CD8-positive, alpha-beta T cell (primary cell): ENCODE measurements at regions of chr1 and their contacts with region 1.

Region 1: GRCh38 chr1:89929467-89930063 is 65.3 kb upstream of the ZNF326 start:
- DNase-seq: no peak
- ATAC-seq: no peak
- H3K4me3 ChIP-seq: no peak overlapping the region
- H3K4me3 Mint-ChIP-seq: no peak overlapping the region
- H3K27ac ChIP-seq: no peak overlapping the region
- H3K27ac Mint-ChIP-seq: peak overlapping the region; percentile 32
- H3K4me1 ChIP-seq: peaks cover 7% of the 10 kb centered on the region
- H3K4me1 Mint-ChIP-seq: peaks cover 30% of the 10 kb centered on the region
- H3K27me3 ChIP-seq: no peaks in the 10 kb centered on the region
- H3K27me3 Mint-ChIP-seq: no peaks in the 10 kb centered on the region
- CTCF ChIP-seq: no peak

Region 2: DNA sequence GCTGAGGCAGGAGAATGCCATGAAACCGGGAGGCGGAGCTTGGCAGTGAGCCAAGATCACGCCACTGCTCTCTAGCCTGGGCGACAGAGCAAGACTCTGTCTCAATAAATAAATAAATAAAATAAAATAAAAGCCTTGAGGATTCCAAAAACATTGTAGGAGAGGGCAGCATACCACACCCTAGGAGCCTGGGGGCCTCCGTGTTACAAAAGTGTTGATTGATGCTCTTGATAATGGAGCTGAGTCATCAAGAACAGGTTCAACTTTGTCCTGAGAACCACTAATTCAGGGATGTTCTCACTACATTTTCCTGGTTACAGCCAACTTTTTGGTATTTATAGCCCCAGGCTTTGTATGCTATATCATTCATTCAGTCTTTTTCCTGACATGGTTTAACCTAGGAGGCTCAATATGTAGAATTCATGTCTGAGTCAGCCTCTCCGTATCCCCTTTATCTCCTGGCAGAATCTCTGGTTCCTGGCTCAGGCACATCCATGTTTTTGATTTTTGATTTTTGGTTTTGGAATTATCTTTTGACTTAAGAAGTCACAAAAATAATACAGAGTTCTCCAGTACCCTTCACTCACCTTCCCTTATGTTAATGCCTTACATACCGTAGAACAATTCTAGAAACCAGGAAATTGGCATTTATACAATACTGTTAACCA is 39.3 kb before region 1 on chr1:
- CTCF ChIA-PET with region 1: no interaction called
- POLR2A ChIA-PET with region 1: no interaction called
- intact Hi-C with region 1: loop called in 1 of 2 experiments (anchors 5 kb)
- DNase-seq: no peak
- ATAC-seq: no peak
- H3K4me3 ChIP-seq: no peak overlapping the region
- H3K4me3 Mint-ChIP-seq: no peak overlapping the region
- H3K27ac ChIP-seq: no peak overlapping the region
- H3K27ac Mint-ChIP-seq: no peak overlapping the region
- H3K4me1 ChIP-seq: no peaks in the 10 kb centered on the region
- H3K4me1 Mint-ChIP-seq: peaks cover 43% of the 10 kb centered on the region
- H3K27me3 ChIP-seq: no peaks in the 10 kb centered on the region
- H3K27me3 Mint-ChIP-seq: no peaks in the 10 kb centered on the region
- CTCF ChIP-seq: no peak

Region 3: DNA sequence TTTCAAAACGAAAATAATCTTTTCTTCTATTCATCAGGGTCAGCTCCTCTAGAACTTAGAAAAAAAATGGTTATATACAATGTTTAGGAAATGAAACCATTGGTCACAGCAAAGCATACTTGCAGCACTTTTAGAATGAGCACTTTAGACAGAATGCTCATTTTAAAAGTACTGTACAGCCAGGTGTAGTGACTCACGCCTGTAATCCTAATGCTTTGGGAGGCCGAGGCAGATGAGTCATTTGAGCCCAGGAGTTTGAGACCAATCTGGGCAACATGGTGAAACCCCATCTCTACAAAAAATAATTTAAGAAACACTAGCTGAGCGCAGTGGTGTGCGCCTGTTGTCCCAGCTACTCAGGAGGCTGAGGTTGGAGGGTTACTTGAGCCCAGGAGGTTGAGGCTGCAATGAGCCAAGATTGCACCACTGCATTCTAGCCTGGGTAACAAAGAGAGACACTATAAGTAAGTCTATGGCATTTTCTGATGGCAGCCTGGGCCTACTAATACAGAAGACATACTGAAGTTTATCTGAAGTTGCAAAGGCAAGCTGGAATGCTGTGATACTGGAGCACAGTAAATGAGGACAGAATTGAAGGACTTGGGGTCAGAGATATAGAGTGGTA is 16.4 kb after region 1 on chr1:
- CTCF ChIA-PET with region 1: no interaction called
- POLR2A ChIA-PET with region 1: no interaction called
- intact Hi-C with region 1: no loop called
- DNase-seq: no peak
- ATAC-seq: no peak
- H3K4me3 ChIP-seq: no peak overlapping the region
- H3K4me3 Mint-ChIP-seq: no peak overlapping the region
- H3K27ac ChIP-seq: no peak overlapping the region
- H3K27ac Mint-ChIP-seq: no peak overlapping the region
- H3K4me1 ChIP-seq: no peaks in the 10 kb centered on the region
- H3K4me1 Mint-ChIP-seq: no peaks in the 10 kb centered on the region
- H3K27me3 ChIP-seq: no peaks in the 10 kb centered on the region
- H3K27me3 Mint-ChIP-seq: no peaks in the 10 kb centered on the region
- CTCF ChIP-seq: no peak